HAP-1 (cell line): ENCODE measurements at regions of chr2 and their contacts with region 1.

Region 1: GRCh38 chr2:175690113-175690837 is 311.8 kb downstream of the LNPK start:
- DNase-seq: peak; percentile 55 to 64
- H3K4me3 ChIP-seq: no peak overlapping the region
- H3K4me1 ChIP-seq: peaks cover 5% of the 10 kb centered on the region
- H3K27me3 ChIP-seq: peaks cover 8% of the 10 kb centered on the region

Region 2: DNA sequence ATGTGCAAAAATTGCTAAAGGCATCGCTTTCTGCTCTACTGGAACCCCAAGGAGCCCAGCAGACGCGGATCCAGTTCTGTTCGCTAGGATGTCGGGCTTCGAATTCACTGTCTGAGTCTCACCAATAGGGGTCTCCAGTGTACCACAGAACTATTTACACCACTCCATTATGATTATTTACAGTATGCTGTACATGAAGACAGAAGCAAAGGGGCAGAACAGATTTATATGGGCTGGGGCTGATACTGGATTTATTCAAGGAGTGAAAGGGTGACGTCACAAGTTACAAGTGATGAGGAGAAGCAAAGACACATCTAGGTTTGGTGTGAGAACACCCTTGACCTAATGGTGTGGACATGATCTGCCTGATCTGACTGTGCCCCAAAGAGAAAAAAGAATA is 323.5 kb before region 1 on chr2:
- in situ Hi-C with region 1: loop called (anchors 25 kb)
- DNase-seq: peak; percentile 61
- H3K4me3 ChIP-seq: no peak overlapping the region
- H3K4me1 ChIP-seq: no peaks in the 10 kb centered on the region
- H3K27me3 ChIP-seq: peaks cover 30% of the 10 kb centered on the region

Region 3: GRCh38 chr2:175600024-175600831 is 90.0 kb before region 1 on chr2:
- in situ Hi-C with region 1: no loop called
- DNase-seq: peak; percentile 38 to 58
- H3K4me3 ChIP-seq: no peak overlapping the region
- H3K4me1 ChIP-seq: peaks cover 32% of the 10 kb centered on the region
- H3K27me3 ChIP-seq: no peaks in the 10 kb centered on the region